ENCODE measurements at regions of chr3 and their contacts with region 1.

Region 1: GRCh38 chr3:32601722-32602121 is 31.1 kb upstream of the DYNC1LI1 start:
- DNase-seq: no peak

Region 2: GRCh38 chr3:32106280-32106928 is 495.3 kb before region 1 on chr3 and contains the start of gene GPD1L:
- intact Hi-C with region 1: no loop called
- DNase-seq: peak; percentile 98
- total RNA-seq, gene GPD1L: 41.0 to 47.4 TPM

Region 3: GRCh38 chr3:32467333-32468070 is 134.2 kb before region 1 on chr3:
- intact Hi-C with region 1: no loop called
- DNase-seq: peak; percentile 93

Region 4: DNA sequence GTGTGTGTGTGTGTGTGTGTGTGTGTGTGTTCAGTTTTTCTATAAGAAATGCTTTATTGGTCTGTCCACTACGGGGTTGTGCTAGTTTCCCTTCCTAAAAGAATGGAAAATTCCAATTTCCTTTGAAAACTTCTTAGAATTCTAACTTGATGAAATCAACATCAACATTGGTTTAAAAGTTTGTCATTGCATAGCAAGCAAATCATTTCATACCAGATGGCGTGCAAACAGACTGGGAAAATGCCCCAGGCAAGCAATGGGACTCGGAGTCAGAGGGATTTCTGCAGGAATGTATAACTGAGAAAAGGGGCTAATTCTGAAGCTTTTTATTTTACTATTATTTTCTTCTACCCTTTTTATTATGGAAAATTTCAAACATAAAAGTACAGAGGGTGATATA is 18.0 kb before region 1 on chr3:
- intact Hi-C with region 1: no loop called
- DNase-seq: no peak

Region 5: GRCh38 chr3:32655167-32655566 is 53.4 kb after region 1 on chr3:
- intact Hi-C with region 1: loop called in 1 of 2 experiments (anchors 2 kb)
- DNase-seq: no peak

Region 6: DNA sequence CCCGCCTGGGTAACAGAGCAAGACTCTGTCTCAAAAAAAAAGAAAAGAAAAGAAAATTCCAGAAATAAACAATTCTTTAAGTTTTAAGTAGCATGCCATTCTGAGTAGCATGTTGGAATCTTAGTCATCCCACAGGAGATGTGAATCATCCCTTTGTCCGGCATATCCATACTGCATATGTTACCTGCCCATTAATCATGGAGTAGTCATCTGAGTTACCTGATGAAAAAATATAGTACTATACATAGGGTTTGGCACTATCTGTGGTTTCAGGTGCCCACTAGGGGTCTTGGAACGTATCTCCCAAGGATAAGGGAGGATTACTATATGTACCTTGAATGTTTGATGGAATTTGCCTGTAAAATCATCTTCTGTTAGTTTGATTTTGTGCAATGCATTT is 343.4 kb after region 1 on chr3:
- intact Hi-C with region 1: no loop called
- DNase-seq: no peak